Endothelial cell of umbilical vein (primary cell): ENCODE measurements at regions of chr12 and their contacts with region 1.

Region 1: DNA sequence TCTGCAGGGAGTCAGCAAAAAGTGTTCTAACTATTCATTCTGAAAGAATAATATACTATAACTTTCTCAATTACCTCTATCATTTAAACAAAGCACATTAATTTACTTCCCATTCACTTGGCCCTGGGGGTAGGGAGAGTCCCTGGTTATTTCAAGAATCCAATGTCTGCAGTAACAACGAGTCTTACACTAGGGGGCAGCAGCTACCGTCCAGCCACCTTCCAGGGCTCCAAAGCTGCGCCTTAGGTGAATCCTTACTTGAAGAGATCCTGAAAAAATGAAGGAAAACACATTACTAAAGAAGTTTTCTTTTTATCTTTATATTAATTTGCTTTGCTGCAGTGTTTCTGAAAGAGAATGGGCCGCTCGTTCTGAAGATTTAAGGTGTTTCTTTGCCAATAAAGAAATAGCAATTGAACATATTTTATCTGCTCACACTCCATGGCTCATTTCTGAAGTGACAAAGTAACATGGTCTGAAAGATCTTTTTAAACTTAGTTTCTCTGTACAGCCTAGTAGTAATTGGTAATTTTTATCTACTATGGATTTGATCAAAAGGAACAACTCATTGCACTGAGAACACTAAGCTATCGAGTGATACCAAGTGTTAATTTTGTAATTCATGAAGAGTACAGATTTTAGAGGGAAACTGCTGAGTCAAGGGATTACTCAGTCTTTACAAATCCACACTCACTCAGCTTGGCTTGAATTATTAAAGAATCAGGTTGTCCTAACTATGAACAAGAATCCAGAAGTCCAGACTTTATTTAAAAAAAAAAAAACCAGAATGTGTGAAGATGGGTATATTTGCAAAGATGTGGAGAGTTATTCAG is 27.6 kb downstream of the BHLHE41 start:
- DNase-seq: peak; percentile 76
- H3K4me3 ChIP-seq: no peak overlapping the region
- H3K27ac ChIP-seq: no peak overlapping the region
- H3K4me1 ChIP-seq: no peaks in the 10 kb centered on the region
- H3K27me3 ChIP-seq: no peaks in the 10 kb centered on the region
- CTCF ChIP-seq: peak; percentile 88 to 89
- POLR2A ChIP-seq: no peak

Region 2: GRCh38 chr12:26298785-26299621 is 201.7 kb after region 1 on chr12:
- CTCF ChIA-PET with region 1: no interaction called
- POLR2A ChIA-PET with region 1: no interaction called
- dilution Hi-C with region 1: no loop called
- intact Hi-C with region 1: no loop called
- DNase-seq: peak; percentile 80
- H3K4me3 ChIP-seq: peak overlapping the region in 1 of 3 experiments; percentile 66
- H3K27ac ChIP-seq: peak overlapping the region; percentile 71
- H3K4me1 ChIP-seq: peaks cover 7% of the 10 kb centered on the region
- H3K27me3 ChIP-seq: no peaks in the 10 kb centered on the region
- CTCF ChIP-seq: peak; percentile 25 to 39
- POLR2A ChIP-seq: no peak

Region 3: GRCh38 chr12:26434299-26435068 is 337.2 kb after region 1 on chr12:
- CTCF ChIA-PET with region 1: interaction called, 3 read pairs
- POLR2A ChIA-PET with region 1: no interaction called
- dilution Hi-C with region 1: no loop called
- intact Hi-C with region 1: loop called (anchors 1 kb)
- DNase-seq: peak; percentile 69
- H3K4me3 ChIP-seq: no peak overlapping the region
- H3K27ac ChIP-seq: no peak overlapping the region
- H3K4me1 ChIP-seq: no peaks in the 10 kb centered on the region
- H3K27me3 ChIP-seq: no peaks in the 10 kb centered on the region
- CTCF ChIP-seq: peak; percentile 62 to 73
- POLR2A ChIP-seq: no peak